HepG2 (cell line): ENCODE measurements at regions of chr10 and their contacts with region 1.

Region 1: DNA sequence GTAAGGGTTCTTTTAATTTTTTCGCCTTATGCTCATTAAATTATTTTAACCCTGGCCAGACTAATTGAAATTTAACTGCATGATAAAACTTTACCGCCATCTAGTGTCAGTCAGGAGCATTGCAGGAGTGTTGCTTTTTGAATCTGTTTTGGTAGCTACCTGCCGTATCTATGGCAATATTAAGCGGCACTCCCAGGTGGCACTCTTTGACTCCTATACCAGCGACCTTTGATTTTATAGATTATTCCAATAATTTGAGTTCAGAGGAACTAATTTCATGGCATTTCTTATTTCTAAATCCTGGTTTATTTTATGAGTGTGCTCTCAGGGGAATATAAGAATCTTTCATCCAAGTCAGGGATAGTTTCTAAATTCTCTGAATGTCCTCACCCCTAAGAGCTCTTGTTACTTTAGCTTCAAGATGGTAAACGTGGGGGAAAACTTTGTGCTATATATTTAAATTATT is 198.9 kb downstream of the REEP3 start:
- DNase-seq: peak; percentile 48
- ATAC-seq: peak; percentile 40; the same call in 2 of the 3 replicates
- H3K4me3 ChIP-seq: no peak overlapping the region
- H3K27ac ChIP-seq: no peak overlapping the region
- H3K4me1 ChIP-seq: peaks cover 14% of the 10 kb centered on the region
- H3K27me3 ChIP-seq: peaks cover 0 to 4% of the 10 kb centered on the region in 2 experiments; a peak in 2 of 5 replicates
- CTCF ChIP-seq: peak; percentile 74
- EP300 ChIP-seq: no peak
- POLR2A ChIP-seq: no peak
- RAD21 ChIP-seq: peak; percentile 68

Region 2: DNA sequence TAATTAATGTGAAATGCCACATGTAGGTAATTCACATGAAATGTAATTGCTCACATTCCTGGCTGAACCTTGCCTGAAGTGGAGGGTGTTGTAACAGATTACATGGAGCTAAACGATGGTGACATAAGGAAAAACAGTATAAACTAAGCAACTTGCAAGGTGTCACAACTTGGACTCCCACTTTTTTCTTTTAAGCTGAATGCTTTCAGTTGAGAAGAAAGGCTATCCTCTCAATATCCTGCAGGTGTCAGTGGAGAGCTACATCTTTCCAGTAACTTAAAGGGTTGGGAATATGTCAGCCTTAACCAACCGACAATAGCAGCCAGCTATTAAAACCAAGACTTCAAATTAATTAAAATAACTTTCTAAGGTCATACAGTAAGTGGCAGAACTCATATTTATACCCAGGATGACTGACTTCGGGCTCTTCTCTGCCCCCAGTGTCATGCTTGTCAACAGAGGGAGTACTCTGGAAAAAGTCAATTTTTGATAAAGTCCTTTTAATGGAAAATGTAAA is 553.3 kb before region 1 on chr10:
- CTCF ChIA-PET with region 1: interaction called, 5 read pairs
- POLR2A ChIA-PET with region 1: no interaction called
- in situ Hi-C with region 1: loop called (anchors 10 kb)
- intact Hi-C with region 1: loop called (anchors 1 kb)
- DNase-seq: peak; percentile 74
- ATAC-seq: peak; percentile 63
- H3K4me3 ChIP-seq: no peak overlapping the region
- H3K27ac ChIP-seq: no peak overlapping the region
- H3K4me1 ChIP-seq: no peaks in the 10 kb centered on the region
- H3K27me3 ChIP-seq: no peaks in the 10 kb centered on the region
- CTCF ChIP-seq: peak; percentile 68
- EP300 ChIP-seq: no peak
- POLR2A ChIP-seq: no peak
- RAD21 ChIP-seq: peak; percentile 36; the same call in 1 of the 2 replicates

Region 3: GRCh38 chr10:63217120-63217605 is 502.9 kb before region 1 on chr10:
- CTCF ChIA-PET with region 1: interaction called, 14 read pairs
- POLR2A ChIA-PET with region 1: no interaction called
- in situ Hi-C with region 1: no loop called
- intact Hi-C with region 1: loop called (anchors 5 kb)
- DNase-seq: peak; percentile 44
- ATAC-seq: peak; percentile 88
- H3K4me3 ChIP-seq: no peak overlapping the region
- H3K27ac ChIP-seq: no peak overlapping the region
- H3K4me1 ChIP-seq: no peaks in the 10 kb centered on the region
- H3K27me3 ChIP-seq: no peaks in the 10 kb centered on the region; a peak in 1 of 5 replicates
- CTCF ChIP-seq: peak; percentile 57
- EP300 ChIP-seq: no peak
- POLR2A ChIP-seq: no peak
- RAD21 ChIP-seq: no peak

Region 4: DNA sequence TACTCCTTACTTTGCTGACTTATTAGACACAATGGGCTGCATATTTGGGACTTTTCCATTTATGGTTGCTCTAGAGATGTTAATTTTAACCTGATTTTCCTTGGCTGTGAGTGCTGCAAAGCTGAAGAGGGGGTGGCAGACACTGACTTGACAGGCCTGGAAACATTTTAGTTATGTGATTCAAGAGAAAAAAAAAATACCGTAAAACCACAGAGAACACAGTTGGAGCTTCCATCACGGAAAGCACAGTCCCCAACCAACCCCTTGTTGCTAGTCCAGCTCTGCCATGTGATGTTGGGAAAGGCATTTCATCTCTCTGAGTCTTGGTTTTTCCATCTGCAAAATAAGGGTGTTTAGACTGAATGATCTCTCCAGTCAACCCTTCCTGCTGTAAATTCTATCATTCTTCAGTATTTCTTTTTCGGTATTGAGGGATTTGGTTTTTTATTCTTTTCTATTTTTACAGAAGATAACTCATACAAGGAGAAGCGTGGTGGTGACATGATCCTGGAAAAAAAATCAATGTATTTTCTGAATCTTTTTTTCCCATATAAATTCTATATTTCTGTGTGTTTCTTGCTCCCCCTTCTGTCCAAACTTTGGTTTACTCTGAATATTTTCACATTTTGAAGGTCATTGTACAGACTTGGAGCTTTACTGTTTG is 47.2 kb after region 1 on chr10:
- CTCF ChIA-PET with region 1: interaction called, 9 read pairs
- POLR2A ChIA-PET with region 1: no interaction called
- in situ Hi-C with region 1: no loop called
- intact Hi-C with region 1: loop called (anchors 1 kb)
- DNase-seq: peak; percentile 4
- ATAC-seq: no peak
- H3K4me3 ChIP-seq: no peak overlapping the region
- H3K27ac ChIP-seq: no peak overlapping the region
- H3K4me1 ChIP-seq: peaks cover 15% of the 10 kb centered on the region
- H3K27me3 ChIP-seq: no peaks in the 10 kb centered on the region
- CTCF ChIP-seq: peak; percentile 33
- EP300 ChIP-seq: no peak
- POLR2A ChIP-seq: no peak
- RAD21 ChIP-seq: no peak

Region 5: DNA sequence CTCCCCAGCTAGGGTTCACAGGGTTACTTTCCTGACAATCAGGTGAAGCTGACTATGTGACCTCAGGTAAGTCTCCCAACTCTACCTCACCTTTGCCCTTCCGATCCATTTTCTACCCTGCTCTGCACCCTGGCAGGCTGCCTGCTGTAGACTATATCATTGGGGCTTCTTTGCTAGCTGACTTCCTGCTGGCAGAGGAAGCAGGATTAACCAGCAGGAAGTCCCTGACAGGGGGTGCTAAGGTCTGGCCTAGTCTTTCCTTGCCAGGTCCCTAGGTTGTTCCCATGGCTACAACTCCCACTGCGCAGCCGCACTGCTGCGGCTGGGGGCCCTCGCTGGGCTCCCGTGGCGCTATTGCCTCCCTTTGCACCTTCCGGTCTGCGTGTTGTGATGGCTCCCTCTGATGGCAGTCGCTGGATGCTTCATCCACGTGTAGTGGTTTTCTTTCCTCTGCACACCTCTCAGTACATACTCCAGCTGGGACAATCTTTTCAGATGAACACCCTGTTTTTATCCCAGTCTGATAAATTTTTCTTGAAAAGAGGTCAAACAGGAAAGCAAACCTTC is 167.0 kb after region 1 on chr10:
- CTCF ChIA-PET with region 1: no interaction called
- POLR2A ChIA-PET with region 1: no interaction called
- in situ Hi-C with region 1: no loop called
- intact Hi-C with region 1: no loop called
- DNase-seq: peak; percentile 34
- ATAC-seq: peak; percentile 86
- H3K4me3 ChIP-seq: no peak overlapping the region
- H3K27ac ChIP-seq: no peak overlapping the region
- H3K4me1 ChIP-seq: peaks cover 5% of the 10 kb centered on the region; the same call in 1 of the 2 replicates
- H3K27me3 ChIP-seq: peaks cover 1 to 3% of the 10 kb centered on the region in 2 experiments; a peak in 2 of 5 replicates
- CTCF ChIP-seq: peak; percentile 47
- EP300 ChIP-seq: no peak
- POLR2A ChIP-seq: no peak
- RAD21 ChIP-seq: no peak